BJ (cell line): ENCODE measurements at regions of chr17 and their contacts with region 1.

Region 1: DNA sequence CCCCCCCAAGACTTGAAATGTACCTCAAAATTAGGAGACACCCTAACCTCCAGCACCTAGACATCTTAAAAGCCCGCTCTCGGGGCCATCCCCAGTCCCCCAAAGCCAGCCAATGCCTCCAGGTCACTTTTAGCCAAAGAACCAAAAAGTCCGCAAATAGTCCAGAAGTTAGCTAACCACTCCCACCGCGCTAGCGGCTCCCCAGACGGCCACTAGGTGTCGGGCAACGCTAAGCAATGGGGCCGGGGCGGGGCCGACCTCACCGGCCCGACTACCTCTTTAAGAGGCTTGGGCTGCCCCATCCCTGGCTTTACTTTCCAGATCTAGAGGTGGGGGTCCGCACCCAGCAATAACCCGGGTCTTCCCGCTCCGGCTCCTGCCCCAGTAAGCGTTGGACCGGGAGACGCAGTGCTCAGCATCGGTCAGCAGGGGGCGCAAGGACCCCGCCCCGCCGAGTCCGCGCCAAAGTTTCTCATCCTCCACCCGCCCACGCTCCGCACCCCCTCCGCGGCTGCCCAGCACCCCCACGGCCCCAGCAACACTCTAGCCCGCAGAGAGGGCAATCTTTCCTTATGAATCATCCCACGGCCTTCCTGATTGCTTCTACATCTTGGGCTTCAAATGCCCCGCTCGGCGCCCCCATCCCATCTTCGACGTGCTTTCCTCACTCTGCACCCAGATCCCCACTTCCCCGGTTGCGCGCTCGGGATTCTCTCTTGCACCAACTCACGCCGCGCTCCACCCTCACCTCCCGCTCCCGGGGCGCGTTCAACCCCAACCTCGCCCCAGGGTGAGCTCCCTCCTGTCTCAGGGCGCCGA is 765 bp downstream of the COL1A1 start:
- DNase-seq: no peak
- H3K4me3 ChIP-seq: peak overlapping the region; percentile 97
- H3K27me3 ChIP-seq: no peaks in the 10 kb centered on the region
- CTCF ChIP-seq: peak; percentile 90

Region 2: GRCh38 chr17:50177983-50178834 is 22.5 kb before region 1 on chr17:
- CTCF ChIA-PET with region 1: interaction called, 16 read pairs
- POLR2A ChIA-PET with region 1: interaction called, 34 read pairs
- DNase-seq: peak; percentile 93
- H3K4me3 ChIP-seq: no peak overlapping the region
- H3K27me3 ChIP-seq: no peaks in the 10 kb centered on the region
- CTCF ChIP-seq: peak; percentile 69

Region 3: DNA sequence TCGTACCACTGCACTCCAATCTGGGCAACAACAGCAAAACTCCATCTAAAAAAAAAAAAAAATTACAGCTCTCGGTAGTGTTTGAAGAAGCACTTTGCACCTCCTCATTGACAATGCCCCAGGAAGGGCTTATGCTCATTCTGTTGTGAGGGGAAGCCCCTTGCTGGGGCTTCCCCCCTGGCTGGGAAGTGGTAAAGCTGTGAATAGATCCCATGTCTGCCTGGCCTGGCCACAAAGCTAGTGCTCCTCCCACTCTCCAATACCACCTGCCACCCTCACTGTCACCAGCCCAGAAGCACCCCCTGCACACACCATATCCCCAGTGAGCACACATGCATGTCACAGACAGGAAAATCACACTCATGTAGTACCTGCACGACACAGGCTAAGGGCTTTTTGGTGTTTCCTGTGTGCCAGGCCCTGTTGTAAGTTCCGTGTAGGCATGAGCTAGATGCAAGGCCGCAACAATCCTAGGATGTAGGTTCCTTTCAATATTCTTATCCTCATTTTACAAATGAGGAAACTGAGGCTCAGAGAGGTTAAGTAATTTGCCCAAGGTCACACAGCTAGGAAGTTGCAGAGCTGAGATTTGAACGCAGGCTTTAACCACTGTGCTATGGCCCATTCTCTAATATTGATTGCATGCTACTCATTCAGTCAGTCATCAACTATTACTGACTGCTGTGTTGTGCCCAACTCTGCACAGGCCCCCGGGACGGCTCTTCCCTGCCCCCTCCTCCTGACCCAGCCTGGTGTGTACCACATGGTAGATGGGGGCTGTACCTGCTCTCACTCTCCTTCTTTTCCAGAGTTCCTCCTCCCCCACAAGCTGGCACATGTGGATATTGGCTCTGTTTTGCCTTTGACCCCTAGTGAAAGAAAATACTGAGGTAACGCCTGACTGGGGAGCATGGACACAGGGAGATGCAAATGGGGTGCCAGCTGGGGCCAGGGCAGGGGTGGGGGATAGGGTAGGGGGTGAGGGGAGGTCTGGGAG is 12.7 kb after region 1 on chr17:
- CTCF ChIA-PET with region 1: interaction called, 65 read pairs
- POLR2A ChIA-PET with region 1: interaction called, 135 read pairs
- DNase-seq: no peak
- H3K4me3 ChIP-seq: no peak overlapping the region
- H3K27me3 ChIP-seq: no peaks in the 10 kb centered on the region
- CTCF ChIP-seq: no peak

Region 4: DNA sequence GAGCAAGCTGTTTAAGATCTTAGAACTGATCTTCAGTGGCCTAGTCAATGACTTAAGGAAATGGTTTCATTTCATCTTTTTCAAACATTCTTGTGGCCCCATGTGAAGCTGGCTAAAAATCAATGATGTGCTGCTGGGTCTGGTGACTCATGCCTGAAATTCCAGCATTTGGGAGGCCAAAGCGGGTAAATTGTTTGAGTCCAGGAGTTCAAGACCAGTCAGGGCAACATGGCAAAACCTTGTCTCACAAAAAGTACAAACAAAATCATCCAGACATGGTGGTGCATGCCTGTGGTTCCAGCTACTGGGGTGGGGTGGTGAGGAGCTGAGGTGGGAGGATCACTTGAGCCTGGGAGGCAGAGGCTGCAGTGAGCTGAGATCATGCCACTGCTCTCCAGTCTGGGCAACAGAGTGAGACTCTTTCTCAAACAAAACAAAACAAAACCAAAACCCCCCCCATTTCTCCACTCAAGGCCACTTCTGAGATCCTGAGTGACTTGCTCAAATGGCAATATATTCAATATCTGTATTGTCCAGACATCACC is 18.2 kb after region 1 on chr17:
- CTCF ChIA-PET with region 1: interaction called, 65 read pairs
- POLR2A ChIA-PET with region 1: interaction called, 58 read pairs
- DNase-seq: peak; percentile 93
- H3K4me3 ChIP-seq: no peak overlapping the region
- H3K27me3 ChIP-seq: no peaks in the 10 kb centered on the region
- CTCF ChIP-seq: no peak

Region 5: GRCh38 chr17:50289991-50290702 is 89.5 kb after region 1 on chr17:
- CTCF ChIA-PET with region 1: interaction called, 6 read pairs
- POLR2A ChIA-PET with region 1: interaction called, 11 read pairs
- DNase-seq: peak; percentile 98
- H3K4me3 ChIP-seq: peak overlapping the region; percentile 18
- H3K27me3 ChIP-seq: no peaks in the 10 kb centered on the region
- CTCF ChIP-seq: no peak